Mammary epithelial cell (primary cell): ENCODE measurements at regions of chr1 and their contacts with region 1.

Region 1: DNA sequence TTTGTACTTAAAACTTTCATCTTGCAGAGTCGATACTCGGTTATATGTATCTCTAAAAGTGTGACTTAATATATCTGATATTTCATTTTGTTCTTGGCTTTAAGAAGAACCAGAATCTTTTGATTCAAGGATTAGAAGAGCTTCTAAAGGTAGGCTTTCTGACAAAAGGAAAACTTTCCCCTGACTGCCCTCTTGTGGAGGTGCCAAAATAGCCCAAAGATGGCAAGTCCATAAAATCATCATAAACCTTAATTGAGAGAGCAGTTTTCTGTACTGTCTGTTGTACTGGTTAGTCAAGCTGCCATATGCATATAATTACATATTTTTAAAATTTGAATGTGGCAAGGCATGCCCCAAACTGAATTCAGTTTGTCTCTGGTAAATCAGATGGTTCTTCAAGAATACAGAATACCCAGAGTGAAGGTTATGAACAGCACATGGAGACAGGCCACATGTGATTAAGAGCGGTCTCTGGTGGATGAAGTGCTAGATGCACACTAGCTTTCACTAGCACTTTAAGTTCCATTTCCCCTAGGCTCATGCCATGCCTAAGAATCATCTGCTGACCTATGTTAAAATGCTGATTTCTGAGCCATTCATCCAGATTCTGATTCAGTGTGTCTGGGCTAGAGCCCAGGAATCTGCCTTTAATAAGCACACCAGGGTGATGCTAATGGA is 27.7 kb upstream of the ELAVL4 start:
- DNase-seq: peak; percentile 8
- H3K4me3 ChIP-seq: no peak overlapping the region
- H3K27ac ChIP-seq: no peak overlapping the region
- H3K4me1 ChIP-seq: no peaks in the 10 kb centered on the region
- H3K27me3 ChIP-seq: no peaks in the 10 kb centered on the region
- CTCF ChIP-seq: peak in 1 of 2 donors; percentile 56

Region 2: GRCh38 chr1:50152236-50152635 is 71.2 kb after region 1 on chr1:
- CTCF ChIA-PET with region 1: no interaction called
- dilution Hi-C with region 1: loop called (anchors 5 kb)
- in situ Hi-C with region 1: no loop called
- intact Hi-C with region 1: no loop called
- DNase-seq: no peak
- H3K4me3 ChIP-seq: no peak overlapping the region
- H3K27ac ChIP-seq: no peak overlapping the region
- H3K4me1 ChIP-seq: peaks cover 4% of the 10 kb centered on the region
- H3K27me3 ChIP-seq: no peaks in the 10 kb centered on the region
- CTCF ChIP-seq: no peak

Region 3: GRCh38 chr1:50332941-50333594 is 252.0 kb after region 1 on chr1:
- CTCF ChIA-PET with region 1: no interaction called
- dilution Hi-C with region 1: no loop called
- in situ Hi-C with region 1: no loop called
- intact Hi-C with region 1: loop called (anchors 10 kb)
- DNase-seq: peak; percentile 20
- H3K4me3 ChIP-seq: peak overlapping the region; percentile 18 to 49 (median 45)
- H3K27ac ChIP-seq: no peak overlapping the region
- H3K4me1 ChIP-seq: peaks cover 8% of the 10 kb centered on the region
- H3K27me3 ChIP-seq: no peaks in the 10 kb centered on the region
- CTCF ChIP-seq: peak; percentile 59 to 81